ENCODE measurements at regions of chr20 and their contacts with region 1.

Region 1: GRCh38 chr20:41173161-41173721 is 35.9 kb downstream of the PLCG1 start:
- DNase-seq: peak; percentile 88
- ATAC-seq: peak; percentile 84 to 92

Region 2: DNA sequence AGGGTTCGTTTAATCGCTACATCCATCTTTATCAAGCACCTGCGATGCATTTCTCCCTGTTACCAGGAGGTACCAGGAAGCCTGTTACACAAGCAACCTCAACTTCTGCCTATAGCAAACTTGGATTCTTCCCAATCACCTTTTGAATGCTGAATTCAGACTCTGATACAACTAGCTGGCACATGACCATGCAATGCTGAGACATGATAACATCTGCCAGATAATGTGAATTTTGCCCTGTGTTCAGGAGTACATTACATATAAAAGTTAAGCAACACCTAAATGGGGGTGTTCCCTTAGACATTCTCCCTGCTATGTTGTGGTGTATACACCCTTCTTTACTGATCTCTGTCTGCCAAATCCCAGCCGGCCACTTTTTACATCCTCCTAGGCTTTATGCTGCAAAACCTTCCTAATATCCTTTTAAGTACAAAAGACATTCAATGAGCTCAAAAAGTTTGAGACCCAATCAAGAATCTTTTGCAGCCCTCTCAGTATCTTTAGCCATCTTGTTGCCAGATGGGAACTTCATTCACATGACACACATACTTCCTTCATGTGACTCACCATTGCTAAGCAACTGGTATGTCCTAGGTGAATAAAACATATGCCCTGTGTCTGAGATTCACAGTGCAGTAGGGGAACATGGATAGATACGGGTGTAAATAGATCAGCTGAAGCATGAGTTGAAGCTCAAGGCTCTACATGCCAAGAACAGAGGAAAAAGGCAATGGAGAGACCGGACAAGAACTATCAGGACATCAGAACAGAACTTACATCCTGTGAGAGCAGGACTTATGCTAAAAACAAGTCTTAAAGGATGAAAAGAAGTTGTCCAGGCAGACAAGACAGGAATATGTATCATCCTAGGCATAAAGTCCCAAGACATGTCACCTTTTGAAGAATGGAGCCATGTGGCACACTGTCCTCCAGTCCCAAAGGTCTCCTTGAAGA is 60.0 kb after region 1 on chr20:
- intact Hi-C with region 1: loop called (anchors 1 to 2 kb)
- DNase-seq: no peak
- ATAC-seq: peak; percentile 8 to 69

Region 3: GRCh38 chr20:42613076-42613475 is 1439.8 kb after region 1 on chr20:
- intact Hi-C with region 1: no loop called
- DNase-seq: no peak
- ATAC-seq: no peak